Psoas muscle (tissue), 8 donors: ENCODE measurements at regions of chr18 and their contacts with region 1.

Region 1: GRCh38 chr18:55589625-55590291 is 1.8 kb upstream of the TCF4 start:
- DNase-seq: peak; percentile 97 to 98
- ATAC-seq: peak; percentile 91 to 97 (median 96)
- H3K4me3 ChIP-seq: peak overlapping the region; percentile 84
- H3K27ac ChIP-seq: peak overlapping the region; percentile 86
- H3K4me1 ChIP-seq: peaks cover 9% of the 10 kb centered on the region
- H3K27me3 ChIP-seq: no peaks in the 10 kb centered on the region
- CTCF ChIP-seq: no peak

Region 2: DNA sequence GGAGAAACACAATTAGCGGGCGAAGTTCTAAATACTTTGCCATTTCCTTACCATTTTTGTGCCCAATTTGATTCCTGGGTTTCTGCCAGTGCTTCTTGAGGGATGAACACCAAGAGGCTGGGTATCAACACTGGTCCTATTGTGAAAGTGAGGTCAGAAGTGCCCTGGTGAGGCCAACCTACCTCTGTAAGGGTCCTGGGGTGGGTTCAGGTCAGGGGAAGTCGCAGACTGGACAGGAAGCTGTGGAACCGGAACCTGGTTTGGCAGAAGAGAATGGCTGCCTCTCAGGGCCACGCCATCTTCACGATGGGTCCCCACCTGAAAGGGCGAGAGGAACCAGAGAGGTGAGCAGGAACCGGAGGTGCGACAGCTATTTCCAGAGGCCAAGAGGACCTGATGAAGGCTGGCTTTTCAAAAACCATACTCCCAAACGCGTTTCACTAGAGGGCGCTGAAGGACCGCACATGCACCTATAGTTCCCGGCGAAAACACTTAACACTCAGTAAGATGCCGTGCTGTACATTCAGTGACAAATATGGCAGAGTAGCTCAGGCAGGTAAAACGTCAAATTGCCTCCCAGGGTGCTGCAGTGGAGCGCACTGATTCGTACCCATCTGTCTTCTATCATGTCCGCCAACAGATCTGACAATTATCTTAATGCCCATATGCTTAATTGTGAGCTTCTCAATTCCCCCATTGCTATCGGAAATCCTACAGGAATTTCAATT is 355.2 kb before region 1 on chr18:
- intact Hi-C with region 1: loop called (anchors 5 to 10 kb)
- DNase-seq: peak; percentile 73 to 80
- ATAC-seq: peak; percentile 82 to 95 (median 90)
- H3K4me3 ChIP-seq: no peak overlapping the region
- H3K27ac ChIP-seq: peak overlapping the region; percentile 48
- H3K4me1 ChIP-seq: peaks cover 17% of the 10 kb centered on the region
- H3K27me3 ChIP-seq: no peaks in the 10 kb centered on the region
- CTCF ChIP-seq: peak; percentile 84

Region 3: DNA sequence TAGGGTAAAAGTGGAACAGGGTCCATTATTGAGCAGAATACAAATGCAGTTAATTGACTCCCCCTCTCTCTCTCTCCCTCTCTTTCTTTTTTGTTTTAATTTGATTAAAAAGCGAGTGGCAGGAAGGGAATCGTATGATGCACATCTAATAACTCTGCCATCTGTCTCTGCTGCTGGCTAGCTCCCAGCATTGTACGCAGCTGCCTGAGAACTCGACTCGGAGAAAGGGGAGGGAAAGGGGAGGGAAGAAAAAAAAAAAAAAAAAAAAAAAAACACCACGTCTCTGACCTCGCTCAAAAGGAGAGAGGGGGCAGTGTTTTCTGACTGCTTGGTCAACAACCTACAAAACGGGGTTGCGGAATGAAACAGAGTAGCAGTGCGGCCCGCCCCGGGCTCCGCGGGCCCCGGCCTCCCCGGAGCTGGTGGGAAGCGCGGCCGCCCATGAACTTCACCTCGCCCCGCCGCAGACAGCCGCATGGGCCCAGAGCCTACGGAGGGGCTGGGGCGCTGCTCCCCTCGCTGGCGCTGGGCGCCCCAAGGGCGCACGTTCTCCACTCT is 267.5 kb before region 1 on chr18:
- intact Hi-C with region 1: loop called (anchors 2 to 5 kb)
- DNase-seq: peak; percentile 90 to 94
- ATAC-seq: peak; percentile 87 to 93 (median 89)
- H3K4me3 ChIP-seq: peak overlapping the region; percentile 77
- H3K27ac ChIP-seq: peak overlapping the region; percentile 89
- H3K4me1 ChIP-seq: peaks cover 40% of the 10 kb centered on the region
- H3K27me3 ChIP-seq: no peaks in the 10 kb centered on the region
- CTCF ChIP-seq: peak; percentile 8

Region 4: DNA sequence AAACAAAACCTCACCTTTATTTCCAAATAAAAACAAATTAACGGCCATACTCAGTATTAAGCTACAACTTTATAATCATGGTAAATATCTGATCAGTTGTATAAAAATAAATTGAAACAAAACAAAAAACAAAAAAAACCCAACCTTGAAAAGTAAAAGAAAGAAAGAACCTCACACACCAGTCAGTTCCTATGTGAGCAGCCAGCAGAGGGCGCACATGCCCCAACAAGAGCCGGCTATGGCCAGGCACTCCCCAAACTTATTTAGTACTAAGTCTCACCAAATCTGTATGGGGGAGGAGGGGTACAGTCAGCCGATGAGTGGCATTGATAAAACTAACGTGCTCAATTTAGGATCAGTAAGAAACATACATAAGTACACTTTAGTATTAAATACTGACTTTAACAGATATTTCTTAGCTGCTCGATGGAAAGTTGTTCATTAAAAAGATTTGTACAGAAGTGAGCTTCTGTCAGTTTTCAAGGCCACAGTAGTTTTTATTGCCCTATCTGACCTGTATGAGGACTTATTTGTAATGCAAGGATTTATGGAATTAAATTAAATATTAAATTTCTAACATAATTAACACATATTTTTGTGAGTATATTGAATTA is 174.4 kb before region 1 on chr18:
- intact Hi-C with region 1: loop called (anchors 2 kb)
- DNase-seq: peak; percentile 88 to 92
- ATAC-seq: peak; percentile 86 to 92 (median 90)
- H3K4me3 ChIP-seq: peak overlapping the region; percentile 20
- H3K27ac ChIP-seq: peak overlapping the region; percentile 32
- H3K4me1 ChIP-seq: peaks cover 63% of the 10 kb centered on the region
- H3K27me3 ChIP-seq: no peaks in the 10 kb centered on the region
- CTCF ChIP-seq: peak; percentile 94

Region 5: GRCh38 chr18:55477499-55477859 is 112.3 kb before region 1 on chr18:
- intact Hi-C with region 1: loop called (anchors 5 to 10 kb)
- DNase-seq: peak; percentile 19 to 58
- ATAC-seq: peak; percentile 79 to 91 (median 87)
- H3K4me3 ChIP-seq: peak overlapping the region; percentile 73
- H3K27ac ChIP-seq: peak overlapping the region; percentile 80
- H3K4me1 ChIP-seq: peaks cover 27% of the 10 kb centered on the region
- H3K27me3 ChIP-seq: no peaks in the 10 kb centered on the region
- CTCF ChIP-seq: peak; percentile 32

Region 6: DNA sequence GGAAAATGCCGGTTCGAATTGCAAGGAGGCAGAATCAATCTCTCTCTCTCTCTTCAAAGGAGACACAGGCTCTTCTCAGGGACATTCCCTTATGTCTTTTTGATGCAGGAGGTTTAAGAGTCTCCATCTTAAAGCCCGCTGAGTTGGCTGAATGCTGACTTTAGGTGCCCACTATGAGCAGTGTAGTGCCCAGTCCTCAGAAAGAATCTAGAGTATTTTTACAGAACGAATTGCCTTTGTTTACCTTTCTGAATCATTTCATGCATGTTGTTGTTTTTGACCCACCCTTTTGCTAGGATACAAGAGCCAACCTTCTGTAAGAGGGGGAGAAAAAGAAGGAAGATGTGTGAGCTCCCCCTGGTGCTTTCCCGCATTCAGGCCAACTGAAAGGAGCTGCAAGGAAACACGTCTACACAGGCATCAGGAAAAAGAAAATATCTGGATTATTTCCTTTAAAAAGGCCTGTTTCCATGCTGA is 191.8 kb after region 1 on chr18:
- intact Hi-C with region 1: loop called (anchors 2 to 5 kb)
- DNase-seq: peak; percentile 33 to 67
- ATAC-seq: peak; percentile 57 to 80 (median 73)
- H3K4me3 ChIP-seq: no peak overlapping the region
- H3K27ac ChIP-seq: peak overlapping the region; percentile 82
- H3K4me1 ChIP-seq: peaks cover 9% of the 10 kb centered on the region
- H3K27me3 ChIP-seq: no peaks in the 10 kb centered on the region
- CTCF ChIP-seq: peak; percentile 73

Region 7: GRCh38 chr18:55907453-55908175 is 317.9 kb after region 1 on chr18:
- intact Hi-C with region 1: no loop called
- DNase-seq: no peak
- ATAC-seq: no peak
- H3K4me3 ChIP-seq: no peak overlapping the region
- H3K27ac ChIP-seq: no peak overlapping the region
- H3K4me1 ChIP-seq: no peaks in the 10 kb centered on the region
- H3K27me3 ChIP-seq: no peaks in the 10 kb centered on the region
- CTCF ChIP-seq: no peak